ENCODE measurements at regions of chr2 and their contacts with region 1.

Region 1: GRCh38 chr2:20015472-20016083 is 3.1 kb upstream of the MATN3 start:
- H3K4me3 ChIP-seq: no peak overlapping the region
- H3K27ac ChIP-seq: no peak overlapping the region
- H3K4me1 ChIP-seq: no peaks in the 10 kb centered on the region
- CTCF ChIP-seq: peak; percentile 33; the same call in 1 of the 2 replicates

Region 2: DNA sequence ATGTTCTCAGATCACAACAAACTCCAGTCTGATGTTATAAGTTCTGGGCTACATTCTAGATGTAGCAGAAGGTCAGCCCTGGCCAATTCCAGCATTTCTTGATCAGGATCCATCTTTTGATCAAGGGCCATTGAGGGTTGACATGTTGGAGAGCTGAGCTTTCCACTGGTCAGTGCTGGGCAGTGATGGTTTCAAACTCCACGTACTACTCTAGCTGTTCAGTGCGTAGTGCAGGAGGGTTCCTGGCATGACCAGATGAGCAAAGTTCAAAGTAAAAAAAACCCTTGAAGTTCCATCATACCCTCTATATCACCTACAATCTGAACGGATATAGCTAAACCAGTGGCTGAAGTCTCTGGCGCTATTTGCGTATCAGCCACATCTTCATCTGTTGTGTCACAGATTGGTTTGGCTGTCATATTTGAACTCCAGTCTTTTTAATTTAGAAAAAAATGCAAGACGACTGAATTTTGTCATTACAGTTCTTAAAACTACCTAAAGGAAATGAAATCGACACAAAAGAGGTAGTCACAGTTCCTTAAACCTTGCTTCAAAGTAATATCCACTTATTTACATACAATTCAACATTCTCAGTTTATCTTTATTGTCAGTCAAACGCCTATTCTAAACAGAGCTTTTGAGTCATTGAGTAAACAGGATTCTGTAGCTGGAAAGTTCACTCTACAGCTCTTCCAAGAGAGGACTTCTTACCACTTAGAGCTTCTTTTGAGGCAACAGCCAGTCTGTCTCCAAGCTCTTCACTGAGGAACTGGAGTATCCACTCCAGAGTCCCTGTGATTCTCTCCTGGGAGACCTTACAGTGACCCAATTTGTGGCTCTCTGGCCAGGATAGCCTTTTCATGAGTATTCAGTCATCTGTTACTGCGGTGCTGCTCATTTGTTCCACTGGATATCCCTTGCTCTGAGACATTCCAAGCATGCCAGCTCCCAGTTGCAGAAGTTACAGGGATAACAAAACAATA is 446.5 kb before region 1 on chr2:
- CTCF ChIA-PET with region 1: no interaction called
- POLR2A ChIA-PET with region 1: no interaction called
- H3K4me3 ChIP-seq: no peak overlapping the region
- H3K27ac ChIP-seq: no peak overlapping the region
- H3K4me1 ChIP-seq: no peaks in the 10 kb centered on the region
- CTCF ChIP-seq: no peak

Region 3: DNA sequence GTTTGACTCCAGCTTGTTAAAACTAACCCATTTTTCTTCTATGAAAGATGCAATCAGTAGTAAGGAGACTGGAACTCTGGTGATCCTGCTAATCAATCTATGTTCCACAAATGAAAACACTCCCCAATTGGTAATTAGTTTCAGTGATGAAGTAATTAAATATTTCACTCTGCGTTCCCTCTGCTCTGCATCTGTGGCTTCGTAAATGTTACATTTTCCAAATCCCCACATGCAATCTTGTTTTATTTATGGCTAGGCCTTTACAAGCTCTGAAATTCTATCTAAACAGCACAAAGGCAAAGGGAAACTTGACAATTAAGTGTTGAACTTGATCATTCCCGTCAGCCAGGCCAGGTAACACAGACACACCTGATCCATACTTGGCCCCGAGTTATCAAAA is 425.8 kb before region 1 on chr2:
- CTCF ChIA-PET with region 1: no interaction called
- POLR2A ChIA-PET with region 1: no interaction called
- H3K4me3 ChIP-seq: no peak overlapping the region
- H3K27ac ChIP-seq: no peak overlapping the region
- H3K4me1 ChIP-seq: no peaks in the 10 kb centered on the region
- CTCF ChIP-seq: no peak

Region 4: DNA sequence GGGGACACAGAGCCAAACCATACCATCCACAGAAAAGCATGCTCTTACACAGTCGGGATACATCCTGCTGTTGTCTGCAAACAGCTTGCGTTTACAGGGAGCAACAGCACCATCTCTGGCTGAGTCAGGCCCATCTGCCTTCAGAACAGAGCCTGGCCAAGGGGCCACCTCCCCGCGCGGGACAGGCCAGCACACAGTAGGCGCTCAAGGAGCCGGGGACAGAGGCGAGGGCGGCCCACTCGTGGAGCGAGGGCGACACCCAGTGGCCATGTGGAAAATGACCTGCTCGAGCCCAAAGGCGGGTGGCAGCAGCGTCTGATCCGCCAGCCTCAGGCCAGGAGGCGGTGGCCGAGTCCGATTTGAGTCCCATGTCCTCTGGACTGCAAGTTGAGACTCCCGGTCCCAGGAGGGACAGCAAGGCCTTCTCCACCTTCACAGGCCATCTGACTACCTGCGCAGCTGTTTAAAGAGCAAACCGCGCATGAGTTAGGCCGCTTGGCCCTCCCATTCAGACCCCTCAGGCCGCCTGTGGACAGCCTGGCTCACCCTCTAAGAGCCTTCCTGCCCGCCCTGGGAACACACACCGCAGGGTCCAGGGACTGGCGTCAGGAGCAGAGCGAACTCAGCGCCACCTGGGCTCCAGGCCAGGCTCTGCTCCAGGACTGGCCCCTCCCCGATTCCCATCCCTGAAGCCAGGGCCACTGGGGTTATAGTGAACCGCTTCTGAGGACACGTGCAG is 152.1 kb before region 1 on chr2:
- CTCF ChIA-PET with region 1: no interaction called
- POLR2A ChIA-PET with region 1: no interaction called
- H3K4me3 ChIP-seq: no peak overlapping the region
- H3K27ac ChIP-seq: no peak overlapping the region
- H3K4me1 ChIP-seq: no peaks in the 10 kb centered on the region
- CTCF ChIP-seq: peak; percentile 83

Region 5: GRCh38 chr2:19929226-19929625 is 86.4 kb before region 1 on chr2:
- CTCF ChIA-PET with region 1: no interaction called
- POLR2A ChIA-PET with region 1: no interaction called
- H3K4me3 ChIP-seq: no peak overlapping the region
- H3K27ac ChIP-seq: no peak overlapping the region
- H3K4me1 ChIP-seq: peaks cover 3% of the 10 kb centered on the region; the same call in 1 of the 2 replicates
- CTCF ChIP-seq: no peak

Region 6: DNA sequence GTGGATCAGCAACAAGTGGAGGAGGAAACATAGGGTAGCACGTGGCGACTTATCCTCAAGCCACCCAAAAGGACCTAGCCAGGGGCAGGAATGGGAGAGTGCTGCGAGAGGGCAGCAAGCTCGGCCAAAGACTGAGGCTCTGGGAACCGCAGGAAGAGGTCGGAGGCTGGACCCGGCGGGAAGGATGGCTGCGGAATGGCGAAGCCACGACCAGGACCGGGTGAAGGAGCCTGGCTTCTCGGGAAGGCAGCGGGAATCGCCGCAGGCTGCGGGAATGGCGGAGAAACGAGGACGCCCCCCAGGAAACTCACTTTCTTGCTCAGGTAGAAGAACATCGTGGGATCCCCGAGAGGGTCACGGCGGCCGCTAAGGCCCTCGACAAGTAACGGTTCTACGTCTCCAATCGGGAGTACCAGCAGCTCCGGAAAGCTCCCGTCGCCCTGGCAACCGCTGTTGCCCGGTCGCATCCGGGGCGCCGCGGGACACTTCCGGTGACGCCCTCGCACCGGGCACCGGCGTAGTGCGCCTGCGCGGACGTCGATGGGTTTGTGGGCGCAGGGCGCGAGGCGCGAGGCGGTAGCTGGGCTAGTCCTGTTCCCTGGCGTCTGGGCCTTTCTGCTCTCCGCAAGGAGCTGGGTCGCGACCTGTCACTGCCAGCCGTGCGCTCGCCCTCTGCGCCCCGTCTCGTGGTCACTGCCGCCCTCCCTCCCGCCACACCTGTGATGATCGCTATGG is 25.7 kb before region 1 on chr2 and contains the start of gene WDR35:
- CTCF ChIA-PET with region 1: interaction called, 15 read pairs
- POLR2A ChIA-PET with region 1: interaction called, 3 read pairs
- H3K4me3 ChIP-seq: peak within 1 kb of the TSS; percentile 56
- H3K27ac ChIP-seq: no peak within 1 kb of the TSS; the same call in 1 of the 2 replicates
- H3K4me1 ChIP-seq: 0 out of 2 replicates have a peak, but pooled peaks cover 3% of the 10 kb centered on the region
- CTCF ChIP-seq: no peak

Region 7: DNA sequence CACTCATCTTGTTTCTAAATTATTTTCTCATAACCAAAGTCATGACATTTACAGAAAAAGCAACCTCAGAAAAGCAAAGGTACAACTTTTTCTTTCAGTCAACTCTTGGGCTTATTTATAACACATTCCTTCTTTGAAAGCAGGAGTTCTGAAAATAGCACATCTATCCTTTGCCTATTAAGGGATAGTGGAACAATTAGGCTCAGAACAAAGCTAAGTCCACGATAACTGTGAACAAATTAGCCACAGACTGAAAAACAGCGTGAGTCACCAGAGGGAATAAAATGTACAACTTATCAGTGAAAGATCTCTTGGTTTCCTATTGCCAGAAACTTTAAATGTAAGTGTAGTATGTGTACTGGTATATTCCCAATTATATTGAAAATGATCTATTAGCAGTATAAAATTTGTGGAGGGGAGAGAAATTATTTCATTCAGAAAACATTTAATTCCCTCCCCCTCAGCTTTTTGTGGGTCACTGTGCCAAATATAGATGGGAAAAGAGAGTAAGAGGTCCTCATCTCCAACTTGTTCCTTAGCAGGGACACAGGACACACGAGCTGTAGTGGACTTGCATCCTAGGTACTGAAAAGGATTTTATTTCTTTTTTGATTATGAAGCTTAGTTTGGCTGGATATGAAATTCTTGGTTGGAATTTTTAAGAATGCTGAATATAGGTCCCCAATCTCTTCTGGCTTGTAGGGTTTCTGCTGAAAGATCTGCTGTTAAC is 12.3 kb after region 1 on chr2:
- CTCF ChIA-PET with region 1: interaction called, 15 read pairs
- POLR2A ChIA-PET with region 1: no interaction called
- H3K4me3 ChIP-seq: no peak overlapping the region
- H3K27ac ChIP-seq: no peak overlapping the region; the same call in 1 of the 2 replicates
- H3K4me1 ChIP-seq: 0 out of 2 replicates have a peak, but pooled peaks cover 2% of the 10 kb centered on the region
- CTCF ChIP-seq: no peak

Region 8: GRCh38 chr2:20051532-20052228 is 36.1 kb after region 1 on chr2 and contains the start of gene LAPTM4A:
- CTCF ChIA-PET with region 1: interaction called, 14 read pairs
- POLR2A ChIA-PET with region 1: no interaction called
- H3K4me3 ChIP-seq: peak within 1 kb of the TSS; percentile 81
- H3K27ac ChIP-seq: peak within 1 kb of the TSS; percentile 83
- H3K4me1 ChIP-seq: peaks cover 7% of the 10 kb centered on the region
- CTCF ChIP-seq: 0 out of 2 replicates have a peak, but pooled peaks have one; percentile 9